Caco-2 (cell line): ENCODE measurements at regions of chr3 and their contacts with region 1.

Region 1: DNA sequence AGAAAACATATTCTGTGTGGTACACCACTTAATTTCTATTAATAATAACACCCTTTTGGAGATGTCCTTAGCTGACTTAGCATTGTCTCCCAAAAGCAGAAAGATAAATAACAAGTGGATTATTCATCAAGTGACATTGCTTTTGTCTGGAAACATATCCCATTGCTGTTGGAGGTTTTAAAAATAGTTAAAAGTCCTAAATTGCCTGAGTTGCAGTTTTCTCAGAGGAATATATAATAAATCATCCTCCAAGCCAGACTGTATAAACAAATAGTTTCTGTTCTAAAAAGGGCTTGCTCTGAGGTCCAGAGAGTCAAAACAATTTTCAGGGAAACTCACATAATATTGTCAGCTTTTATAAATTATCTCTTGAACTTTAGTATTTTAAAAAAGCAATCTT is 60.4 kb upstream of the CD96 start:
- DNase-seq: no peak
- H3K4me3 ChIP-seq: no peak overlapping the region
- H3K4me3 Mint-ChIP-seq: no peak overlapping the region
- H3K27ac Mint-ChIP-seq: no peak overlapping the region
- H3K4me1 ChIP-seq: peaks cover 15% of the 10 kb centered on the region; the same call in 1 of the 2 replicates
- H3K4me1 Mint-ChIP-seq: no peaks in the 10 kb centered on the region
- H3K27me3 ChIP-seq: no peaks in the 10 kb centered on the region
- H3K27me3 Mint-ChIP-seq: no peaks in the 10 kb centered on the region
- CTCF ChIP-seq: no peak

Region 2: DNA sequence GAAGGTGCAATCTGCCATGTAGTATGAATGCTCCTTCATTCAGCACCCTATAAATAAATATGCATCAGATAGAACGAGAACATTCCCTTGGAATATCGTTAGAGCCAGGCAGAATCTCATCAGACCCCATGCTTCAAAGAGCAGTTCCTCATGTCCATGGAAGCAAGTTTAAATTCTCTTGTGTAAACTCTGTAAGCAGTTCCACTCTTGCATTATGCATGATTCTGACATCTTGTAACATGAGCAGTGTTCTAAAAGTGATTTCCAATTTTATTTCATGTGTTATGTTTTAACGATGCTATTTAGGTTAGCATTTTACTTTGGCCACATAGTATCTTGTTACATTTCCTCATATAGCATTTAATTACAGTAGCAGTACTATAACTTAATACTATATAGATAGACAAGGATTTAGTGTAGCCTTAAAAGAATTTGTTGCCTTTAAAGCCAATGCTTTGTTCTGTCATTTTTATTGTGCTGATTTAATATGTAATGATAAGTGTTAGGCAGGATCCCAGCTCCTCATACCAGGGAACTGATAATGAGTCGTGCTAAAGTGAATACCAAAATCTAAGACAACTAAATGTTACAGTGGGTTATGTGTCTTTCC is 571.1 kb before region 1 on chr3:
- CTCF ChIA-PET with region 1: no interaction called
- POLR2A ChIA-PET with region 1: no interaction called
- intact Hi-C with region 1: no loop called
- DNase-seq: no peak
- H3K4me3 ChIP-seq: no peak overlapping the region
- H3K4me3 Mint-ChIP-seq: no peak overlapping the region
- H3K27ac Mint-ChIP-seq: no peak overlapping the region
- H3K4me1 ChIP-seq: no peaks in the 10 kb centered on the region
- H3K4me1 Mint-ChIP-seq: peaks cover 7% of the 10 kb centered on the region
- H3K27me3 ChIP-seq: no peaks in the 10 kb centered on the region
- H3K27me3 Mint-ChIP-seq: no peaks in the 10 kb centered on the region
- CTCF ChIP-seq: no peak

Region 3: DNA sequence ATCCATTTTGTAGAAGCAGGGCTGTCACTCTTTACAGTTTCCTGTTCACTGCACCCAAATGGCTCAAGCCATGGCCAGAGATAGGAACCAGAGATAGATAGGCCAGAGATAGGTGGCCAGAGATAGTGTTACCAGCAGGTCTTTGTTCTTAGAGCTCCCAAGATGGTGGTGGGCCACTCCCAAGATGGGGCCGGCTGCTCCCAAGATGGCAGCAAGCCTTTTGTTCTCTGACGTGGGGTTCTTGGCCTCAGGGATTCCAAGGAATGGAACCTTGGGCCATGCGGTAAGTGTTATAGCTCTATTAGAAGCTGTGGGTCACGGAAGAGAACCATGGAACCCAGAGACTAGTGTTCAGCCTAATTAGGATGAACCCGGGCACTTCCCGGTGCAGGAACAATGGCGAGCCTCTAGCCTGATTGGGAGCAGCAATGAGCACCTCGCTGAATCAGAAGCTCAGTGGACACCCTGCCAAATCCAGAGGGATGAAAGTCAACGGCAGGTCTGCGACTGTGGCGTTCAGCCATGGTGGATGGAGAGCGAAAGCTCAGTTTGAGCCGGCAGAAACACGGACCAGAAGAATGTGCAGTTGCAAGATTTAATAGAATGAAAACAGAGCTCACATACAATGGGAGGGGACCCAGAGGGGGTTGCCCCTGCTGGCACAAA is 15.5 kb after region 1 on chr3:
- CTCF ChIA-PET with region 1: no interaction called
- POLR2A ChIA-PET with region 1: no interaction called
- intact Hi-C with region 1: loop called (anchors 1 kb)
- DNase-seq: no peak
- H3K4me3 ChIP-seq: no peak overlapping the region
- H3K4me3 Mint-ChIP-seq: no peak overlapping the region
- H3K27ac Mint-ChIP-seq: no peak overlapping the region
- H3K4me1 ChIP-seq: no peaks in the 10 kb centered on the region
- H3K4me1 Mint-ChIP-seq: no peaks in the 10 kb centered on the region
- H3K27me3 ChIP-seq: no peaks in the 10 kb centered on the region
- H3K27me3 Mint-ChIP-seq: no peaks in the 10 kb centered on the region
- CTCF ChIP-seq: no peak